ENCODE measurements at regions of chr17 and their contacts with region 1.

Region 1: GRCh38 chr17:50478391-50479381 is at the start of gene RSAD1:
- DNase-seq: peak; percentile 85 to 96
- ATAC-seq: peak; percentile 78 to 89
- H3K4me3 ChIP-seq: peak within 1 kb of the TSS; percentile 65
- H3K27ac ChIP-seq: peak within 1 kb of the TSS; percentile 79 to 91
- H3K4me1 ChIP-seq: peaks cover 31% of the 10 kb centered on the region
- CTCF ChIP-seq: peak; percentile 100
- EP300 ChIP-seq: no peak
- POLR2A ChIP-seq: peak; percentile 90
- RAD21 ChIP-seq: peak; percentile 41 to 78
- polyA plus RNA-seq, gene RSAD1: 38.2 and 47.2 TPM in 2 replicates

Region 2: DNA sequence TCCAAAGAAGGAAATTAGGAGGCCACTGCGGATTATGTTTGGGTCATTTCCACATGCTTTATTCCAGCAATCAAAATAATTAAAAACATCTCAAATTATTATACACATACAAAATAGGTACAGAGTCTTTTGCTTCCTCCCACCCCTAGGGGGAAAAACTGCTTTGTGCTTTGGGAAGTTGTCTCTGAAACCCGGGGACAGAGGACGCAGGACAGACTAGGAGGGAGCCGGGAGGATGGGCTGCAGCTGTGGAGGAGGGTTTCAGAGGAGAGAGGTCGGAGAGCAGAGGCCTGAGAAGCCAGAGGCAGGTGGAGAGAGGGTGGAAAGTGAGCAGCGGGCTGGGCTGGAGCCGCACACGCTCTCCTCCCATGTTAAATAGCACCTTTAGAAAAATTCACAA is 294.6 kb before region 1 on chr17:
- CTCF ChIA-PET with region 1: no interaction called
- POLR2A ChIA-PET with region 1: no interaction called
- DNase-seq: no peak
- ATAC-seq: peak in 1 of 2 experiments; percentile 27; a peak in 3 of 6 replicates
- H3K4me3 ChIP-seq: no peak overlapping the region
- H3K27ac ChIP-seq: peak overlapping the region; percentile 37 to 67; a peak in 4 of 6 replicates
- H3K4me1 ChIP-seq: peaks cover 23% of the 10 kb centered on the region
- CTCF ChIP-seq: no peak
- EP300 ChIP-seq: no peak
- POLR2A ChIP-seq: no peak
- RAD21 ChIP-seq: no peak

Region 3: DNA sequence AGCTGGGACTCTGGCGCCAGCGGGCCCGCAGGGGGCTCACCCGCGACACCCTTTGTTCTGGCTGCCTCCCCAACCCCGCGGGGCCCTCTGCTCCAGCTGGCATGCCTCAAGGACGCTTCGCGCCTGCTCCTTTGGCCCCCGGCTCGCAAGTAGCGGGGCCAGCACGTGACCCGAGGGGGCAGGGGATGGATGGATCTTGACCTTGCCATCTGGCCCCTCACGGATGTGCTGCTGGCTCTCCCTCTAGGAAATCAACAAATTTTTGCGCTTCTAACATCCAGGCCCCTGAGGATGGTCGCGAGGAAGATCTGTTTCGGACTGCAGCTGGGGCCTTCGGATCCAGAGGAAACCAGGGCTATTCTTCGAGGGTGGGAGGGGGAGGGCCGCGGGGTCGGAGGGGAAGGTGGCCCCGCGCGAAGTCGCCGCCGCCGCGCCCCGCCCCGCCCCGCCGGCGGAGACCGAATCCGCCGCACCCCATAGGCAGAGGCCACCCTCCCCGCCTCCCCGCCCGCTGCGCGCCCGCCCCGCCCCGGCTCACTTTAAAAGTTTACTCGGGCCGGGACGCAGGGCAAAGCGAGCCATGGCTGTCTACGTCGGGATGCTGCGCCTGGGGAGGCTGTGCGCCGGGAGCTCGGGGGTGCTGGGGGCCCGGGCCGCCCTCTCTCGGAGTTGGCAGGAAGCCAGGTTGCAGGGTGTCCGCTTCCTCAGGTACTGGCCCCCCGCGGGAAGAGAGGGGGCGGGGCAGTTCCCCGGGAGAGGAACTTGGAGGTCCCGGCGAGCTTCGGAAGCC is 52.8 kb before region 1 on chr17 and contains the start of gene ACSF2:
- CTCF ChIA-PET with region 1: interaction called, 11 read pairs
- POLR2A ChIA-PET with region 1: no interaction called
- DNase-seq: peak; percentile 50 to 87
- ATAC-seq: peak; percentile 84 to 90
- H3K4me3 ChIP-seq: peak within 1 kb of the TSS; percentile 72
- H3K27ac ChIP-seq: peak within 1 kb of the TSS; percentile 77 to 90
- H3K4me1 ChIP-seq: peaks cover 27% of the 10 kb centered on the region
- CTCF ChIP-seq: no peak
- EP300 ChIP-seq: no peak
- POLR2A ChIP-seq: no peak
- RAD21 ChIP-seq: no peak
- polyA plus RNA-seq, gene ACSF2: 28.9 and 33.6 TPM in 2 replicates

Region 4: GRCh38 chr17:50501054-50501453 is 22.4 kb after region 1 on chr17:
- CTCF ChIA-PET with region 1: interaction called, 119 read pairs
- POLR2A ChIA-PET with region 1: interaction called, 4 read pairs
- DNase-seq: peak in 1 of 2 experiments; percentile 54
- ATAC-seq: peak in 1 of 2 experiments; percentile 9; a peak in 1 of 6 replicates
- H3K4me3 ChIP-seq: no peak overlapping the region
- H3K27ac ChIP-seq: no peak overlapping the region
- H3K4me1 ChIP-seq: peaks cover 5% of the 10 kb centered on the region; the same call in 1 of the 3 replicates
- CTCF ChIP-seq: peak; percentile 64
- EP300 ChIP-seq: no peak
- POLR2A ChIP-seq: no peak
- RAD21 ChIP-seq: peak; percentile 32 to 35; a peak in 2 of 5 replicates

Region 5: DNA sequence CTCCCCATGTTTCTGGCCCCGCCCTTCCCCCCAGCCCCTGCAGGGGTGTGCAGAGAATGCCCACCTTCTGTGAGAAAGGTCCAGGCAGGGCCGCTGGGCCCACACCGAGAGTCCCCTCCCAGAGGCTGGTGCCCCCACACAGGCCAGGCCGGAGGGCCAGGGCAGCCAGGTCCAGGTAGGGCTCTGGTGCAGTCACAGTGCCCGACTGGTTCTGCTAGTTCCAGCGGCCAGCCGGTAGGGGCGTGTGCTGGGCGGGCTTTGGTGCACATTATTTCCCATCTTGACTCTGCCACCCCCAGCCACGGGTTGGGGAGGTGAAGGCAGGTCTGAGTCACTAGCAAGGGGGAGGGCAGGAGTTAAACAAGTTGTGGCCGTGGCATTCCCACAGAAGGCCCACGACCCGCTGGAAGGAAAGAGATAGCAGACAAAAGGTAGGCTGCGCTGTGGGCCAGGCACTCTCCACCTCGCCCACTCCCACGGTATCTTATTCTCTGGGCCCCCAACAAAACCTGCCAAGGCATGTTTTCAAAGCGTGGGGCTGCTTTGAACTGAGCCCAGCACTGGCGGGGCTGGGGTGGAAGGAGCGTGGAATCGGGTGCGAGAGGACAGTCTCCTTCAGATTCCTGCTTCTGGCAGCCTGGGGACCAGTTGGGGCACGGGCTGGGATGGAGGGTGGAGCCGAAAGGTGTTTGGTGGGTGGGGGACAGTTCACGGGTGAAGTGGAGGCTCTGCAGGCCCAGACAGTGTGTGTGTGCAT is 55.7 kb after region 1 on chr17:
- CTCF ChIA-PET with region 1: interaction called, 48 read pairs
- POLR2A ChIA-PET with region 1: interaction called, 4 read pairs
- DNase-seq: peak; percentile 39 to 81
- ATAC-seq: peak; percentile 77 to 86
- H3K4me3 ChIP-seq: peak overlapping the region; percentile 15; the same call in 1 of the 3 replicates
- H3K27ac ChIP-seq: peak overlapping the region; percentile 38 to 81; a peak in 4 of 6 replicates
- H3K4me1 ChIP-seq: peaks cover 34% of the 10 kb centered on the region
- CTCF ChIP-seq: peak; percentile 23; the same call in 1 of the 3 replicates
- EP300 ChIP-seq: no peak
- POLR2A ChIP-seq: no peak
- RAD21 ChIP-seq: no peak

Region 6: DNA sequence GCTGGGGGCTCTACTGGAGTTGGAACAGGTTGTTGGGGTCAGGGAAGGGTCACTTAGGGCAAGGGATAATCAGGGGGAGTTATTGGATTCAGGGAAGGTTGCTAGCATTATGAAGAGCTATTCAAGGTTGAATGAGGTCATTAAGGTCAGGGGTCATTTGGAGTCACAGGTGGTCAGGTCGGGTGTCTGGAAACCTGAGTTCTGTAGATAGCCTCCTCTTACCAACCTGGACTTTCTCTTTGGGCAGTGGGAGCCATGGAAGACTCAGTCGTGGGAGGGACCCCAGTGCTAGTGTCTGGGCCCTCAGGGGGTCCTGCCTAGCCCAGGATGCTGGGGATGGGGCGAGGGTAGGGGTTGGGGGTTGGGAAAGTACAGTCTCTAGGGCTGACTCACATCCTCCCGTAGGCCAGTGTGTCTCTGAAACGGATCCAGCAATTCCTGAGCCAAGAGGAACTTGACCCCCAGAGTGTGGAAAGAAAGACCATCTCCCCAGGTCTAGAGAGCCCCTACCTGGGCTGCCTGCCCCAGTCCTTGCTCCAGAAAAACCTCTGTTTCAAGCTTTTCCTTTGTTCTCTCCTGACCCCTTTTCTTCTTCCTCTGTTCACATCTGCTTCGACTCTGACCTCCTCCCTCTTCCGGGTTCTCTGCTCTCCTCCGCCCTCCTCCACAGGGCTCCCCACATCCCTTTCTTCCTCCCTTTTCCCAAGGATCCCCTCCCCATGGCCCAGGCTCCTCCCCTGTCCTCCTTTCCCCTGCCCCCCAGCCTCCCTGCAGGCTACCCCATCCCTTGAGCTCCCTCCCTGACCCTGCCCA is 189.5 kb after region 1 on chr17:
- CTCF ChIA-PET with region 1: no interaction called
- POLR2A ChIA-PET with region 1: no interaction called
- DNase-seq: peak; percentile 71 to 73
- ATAC-seq: peak; percentile 58 to 62
- H3K4me3 ChIP-seq: 0 out of 3 replicates have a peak overlapping the region, but pooled peaks have one; percentile 0
- H3K27ac ChIP-seq: peak overlapping the region; percentile 98
- H3K4me1 ChIP-seq: peaks cover 100% of the 10 kb centered on the region
- CTCF ChIP-seq: no peak
- EP300 ChIP-seq: peak; percentile 60 to 64; a peak in 2 of 5 replicates
- POLR2A ChIP-seq: no peak
- RAD21 ChIP-seq: 0 out of 5 replicates have a peak, but pooled peaks of 1 of the 2 experiments have one; percentile 27

Region 7: DNA sequence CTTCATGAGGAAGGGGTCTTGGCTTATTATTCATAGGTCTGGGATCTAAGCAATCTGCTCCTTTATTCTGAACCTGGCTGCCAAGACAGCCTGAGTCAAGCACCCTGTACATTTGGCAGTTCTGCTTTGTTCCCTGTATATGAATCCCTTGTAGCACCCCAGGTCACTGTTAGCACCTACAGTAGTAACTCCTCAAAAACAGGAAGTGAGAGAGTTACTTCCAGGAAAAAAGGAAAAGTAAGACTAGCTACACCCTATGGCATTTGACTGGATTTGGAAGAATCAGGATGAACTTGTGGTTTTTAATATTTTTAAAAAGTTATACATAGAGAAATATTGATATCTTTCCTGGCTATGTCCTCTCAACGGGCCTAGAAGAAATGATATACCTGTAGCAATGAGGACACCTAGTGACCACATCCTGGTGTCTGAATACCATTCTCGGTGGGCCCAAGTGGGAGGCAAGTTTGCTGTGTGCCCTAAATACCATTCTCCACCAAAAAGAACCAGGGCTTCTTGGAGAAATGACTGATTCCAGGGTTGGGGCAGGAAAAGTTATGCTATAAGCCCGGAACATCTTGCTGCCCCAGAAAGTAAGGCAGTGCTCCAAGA is 219.1 kb after region 1 on chr17:
- CTCF ChIA-PET with region 1: interaction called, 22 read pairs
- POLR2A ChIA-PET with region 1: interaction called, 3 read pairs
- DNase-seq: peak in 1 of 2 experiments; percentile 61
- ATAC-seq: no peak
- H3K4me3 ChIP-seq: no peak overlapping the region
- H3K27ac ChIP-seq: peak overlapping the region; percentile 97 to 98
- H3K4me1 ChIP-seq: peaks cover 98% of the 10 kb centered on the region
- CTCF ChIP-seq: peak; percentile 64
- EP300 ChIP-seq: no peak
- POLR2A ChIP-seq: no peak
- RAD21 ChIP-seq: peak; percentile 79 to 80

Region 8: DNA sequence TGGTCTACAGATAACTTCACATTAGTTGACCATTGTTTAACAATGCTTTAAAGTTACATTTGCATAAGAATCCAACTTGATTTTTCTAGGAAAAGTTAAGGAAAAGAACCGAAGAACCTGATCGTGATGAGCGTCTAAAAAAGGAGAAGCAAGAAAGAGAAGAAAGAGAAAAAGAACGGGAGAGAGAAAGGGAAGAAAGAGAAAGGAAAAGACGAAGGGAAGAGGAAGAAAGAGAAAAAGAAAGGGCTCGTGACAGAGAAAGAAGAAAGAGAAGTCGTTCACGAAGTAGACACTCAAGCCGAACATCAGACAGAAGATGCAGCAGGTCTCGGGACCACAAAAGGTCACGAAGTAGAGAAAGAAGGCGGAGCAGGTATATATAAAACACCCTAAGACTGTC is 266.9 kb after region 1 on chr17:
- CTCF ChIA-PET with region 1: no interaction called
- POLR2A ChIA-PET with region 1: no interaction called
- DNase-seq: no peak
- ATAC-seq: no peak
- H3K4me3 ChIP-seq: no peak overlapping the region
- H3K27ac ChIP-seq: no peak overlapping the region
- H3K4me1 ChIP-seq: no peaks in the 10 kb centered on the region
- CTCF ChIP-seq: no peak
- EP300 ChIP-seq: no peak
- POLR2A ChIP-seq: no peak
- RAD21 ChIP-seq: no peak